ENCODE measurements at regions of chr21 and their contacts with region 1.

Region 1: GRCh38 chr21:38811257-38811656 is 5.5 kb downstream of the ETS2 start:
- DNase-seq: peak; percentile 87
- H3K4me3 ChIP-seq: peak overlapping the region in 1 of 3 experiments; percentile 23
- H3K27ac ChIP-seq: peak overlapping the region; percentile 85
- H3K4me1 ChIP-seq: peaks cover 43% of the 10 kb centered on the region
- H3K27me3 ChIP-seq: no peaks in the 10 kb centered on the region
- CTCF ChIP-seq: no peak
- POLR2A ChIP-seq: no peak

Region 2: DNA sequence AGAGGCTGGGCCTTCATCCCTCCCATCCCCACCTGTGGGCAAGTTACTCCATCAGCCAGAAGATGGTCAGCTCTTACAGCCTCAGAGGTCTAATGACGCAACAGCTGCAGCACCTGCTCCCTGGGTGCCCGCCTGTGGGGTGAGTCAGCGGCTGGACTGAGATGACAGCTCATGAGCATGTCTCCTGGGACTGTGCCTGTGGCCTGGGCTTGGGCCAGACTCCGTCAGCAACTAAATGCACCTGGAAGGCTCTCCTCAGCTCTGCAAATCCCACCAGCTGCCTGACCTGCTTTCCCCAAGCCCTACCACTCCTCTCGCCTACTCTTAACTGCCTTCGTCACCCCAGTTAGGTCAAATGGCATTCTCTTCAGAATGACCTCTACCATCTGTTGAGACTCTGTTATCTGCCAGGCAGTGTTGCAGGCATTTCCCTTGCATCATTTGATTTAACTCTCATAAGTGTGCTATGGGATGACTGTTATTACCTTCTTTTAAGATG is 42.2 kb after region 1 on chr21:
- CTCF ChIA-PET with region 1: interaction called, 3 read pairs
- POLR2A ChIA-PET with region 1: no interaction called
- dilution Hi-C with region 1: no loop called
- intact Hi-C with region 1: loop called (anchors 1 kb)
- DNase-seq: peak; percentile 88
- H3K4me3 ChIP-seq: no peak overlapping the region
- H3K27ac ChIP-seq: peak overlapping the region; percentile 73
- H3K4me1 ChIP-seq: peaks cover 41% of the 10 kb centered on the region
- H3K27me3 ChIP-seq: no peaks in the 10 kb centered on the region
- CTCF ChIP-seq: no peak
- POLR2A ChIP-seq: no peak

Region 3: DNA sequence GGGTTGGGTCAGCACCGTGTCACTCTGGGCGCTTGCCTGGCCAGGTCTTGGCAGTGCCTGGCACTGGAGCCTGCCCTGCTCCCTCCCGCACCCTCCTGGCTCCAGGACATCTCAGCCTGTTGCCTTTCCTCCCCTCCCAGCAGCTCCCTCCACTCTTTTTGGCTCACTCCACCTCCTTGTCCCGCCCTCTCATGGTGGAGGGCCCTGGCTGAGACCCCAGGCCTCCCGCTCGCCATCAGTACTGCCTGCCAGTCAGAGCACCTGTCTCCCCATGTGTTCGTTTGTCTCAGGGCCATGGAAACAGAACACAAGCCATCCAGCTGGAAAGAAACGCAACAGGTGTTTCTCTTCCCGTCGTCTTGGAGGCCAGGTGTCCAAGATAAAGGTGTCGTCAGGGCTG is 862.5 kb after region 1 on chr21:
- CTCF ChIA-PET with region 1: no interaction called
- POLR2A ChIA-PET with region 1: no interaction called
- dilution Hi-C with region 1: no loop called
- intact Hi-C with region 1: no loop called
- DNase-seq: no peak
- H3K4me3 ChIP-seq: no peak overlapping the region
- H3K27ac ChIP-seq: no peak overlapping the region
- H3K4me1 ChIP-seq: no peaks in the 10 kb centered on the region
- H3K27me3 ChIP-seq: no peaks in the 10 kb centered on the region
- CTCF ChIP-seq: no peak
- POLR2A ChIP-seq: no peak

Measured in endothelial cell of umbilical vein (primary cell).